ENCODE measurements at regions of chr12 and their contacts with region 1.

Region 1: DNA sequence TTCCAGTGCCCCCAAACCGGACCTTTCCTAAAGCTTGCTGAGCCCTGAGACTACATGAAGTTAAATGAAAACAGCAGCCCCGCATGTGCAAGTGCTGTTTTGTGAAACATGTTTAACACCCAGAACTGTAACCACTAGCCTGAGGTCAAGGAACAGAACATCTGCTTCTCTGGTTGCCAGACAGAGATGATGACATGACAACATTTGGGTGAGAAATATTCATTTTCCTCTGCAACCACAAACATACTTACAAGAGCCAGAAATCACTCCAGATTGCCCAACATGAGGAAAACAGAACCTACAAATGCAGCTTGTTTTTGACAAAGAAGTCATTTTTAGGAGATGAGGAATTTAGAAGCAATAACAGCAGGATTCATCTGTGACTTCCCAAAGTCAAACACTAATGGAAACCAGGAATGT is 110.4 kb downstream of the BCAT1 start:
- DNase-seq: peak; percentile 53
- ATAC-seq: peak; percentile 6
- H3K4me3 Mint-ChIP-seq: peak overlapping the region; percentile 36
- H3K27ac Mint-ChIP-seq: peak overlapping the region; percentile 87
- H3K4me1 Mint-ChIP-seq: peaks cover 51% of the 10 kb centered on the region
- H3K27me3 Mint-ChIP-seq: peaks cover 10% of the 10 kb centered on the region

Region 2: GRCh38 chr12:24561882-24562760 is 276.4 kb before region 1 on chr12:
- CTCF ChIA-PET with region 1: no interaction called
- POLR2A ChIA-PET with region 1: no interaction called
- intact Hi-C with region 1: loop called in 1 of 2 experiments (anchors 5 kb)
- DNase-seq: peak; percentile 51
- ATAC-seq: peak; percentile 53
- H3K4me3 Mint-ChIP-seq: peak overlapping the region; percentile 69
- H3K27ac Mint-ChIP-seq: peak overlapping the region; percentile 26
- H3K4me1 Mint-ChIP-seq: peaks cover 15% of the 10 kb centered on the region
- H3K27me3 Mint-ChIP-seq: peaks cover 59% of the 10 kb centered on the region

Region 3: DNA sequence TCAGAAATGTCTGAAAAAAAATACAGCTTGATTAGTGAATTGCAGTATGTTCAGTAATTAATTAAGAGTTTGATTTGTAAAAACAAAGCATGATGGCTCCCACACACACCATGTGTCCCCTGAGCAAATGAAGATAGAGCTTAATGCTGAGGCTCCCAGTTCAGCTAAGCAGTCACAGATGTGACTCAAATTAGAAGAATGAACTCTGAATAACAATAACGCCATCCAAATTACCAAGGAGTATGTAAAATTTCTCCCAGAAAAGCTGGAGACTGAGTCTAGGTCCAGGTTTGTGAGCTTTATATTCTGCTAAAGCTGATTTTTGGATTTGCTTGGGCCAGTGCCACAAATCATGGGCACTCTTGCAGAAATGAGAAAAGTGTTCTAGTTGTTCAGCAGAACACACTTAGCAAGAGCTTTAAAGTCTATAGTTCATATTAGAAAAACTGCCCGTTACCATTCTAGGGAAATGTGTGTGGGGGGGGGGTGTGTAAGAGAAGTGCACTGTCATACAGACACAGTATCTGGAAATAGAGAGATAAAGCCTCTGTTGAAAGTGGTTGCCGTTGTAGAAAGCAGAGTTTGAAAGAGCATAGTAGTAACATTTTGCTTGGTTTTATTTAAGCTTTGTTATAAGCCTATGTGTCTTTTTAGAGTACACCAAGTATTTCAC is 142.7 kb before region 1 on chr12:
- CTCF ChIA-PET with region 1: no interaction called
- POLR2A ChIA-PET with region 1: no interaction called
- intact Hi-C with region 1: no loop called
- DNase-seq: no peak
- ATAC-seq: no peak
- H3K4me3 Mint-ChIP-seq: no peak overlapping the region
- H3K27ac Mint-ChIP-seq: no peak overlapping the region
- H3K4me1 Mint-ChIP-seq: no peaks in the 10 kb centered on the region
- H3K27me3 Mint-ChIP-seq: peaks cover 9% of the 10 kb centered on the region

Region 4: GRCh38 chr12:24728366-24728765 is 110.2 kb before region 1 on chr12:
- CTCF ChIA-PET with region 1: interaction called, 4 read pairs
- POLR2A ChIA-PET with region 1: interaction called, 3 read pairs
- intact Hi-C with region 1: loop called (anchors 1 kb)
- DNase-seq: no peak
- ATAC-seq: no peak
- H3K4me3 Mint-ChIP-seq: no peak overlapping the region
- H3K27ac Mint-ChIP-seq: peak overlapping the region; percentile 37
- H3K4me1 Mint-ChIP-seq: peaks cover 53% of the 10 kb centered on the region
- H3K27me3 Mint-ChIP-seq: no peaks in the 10 kb centered on the region

Region 5: GRCh38 chr12:24852420-24852819 is 13.9 kb after region 1 on chr12:
- CTCF ChIA-PET with region 1: interaction called, 24 read pairs
- POLR2A ChIA-PET with region 1: interaction called, 3 read pairs
- intact Hi-C with region 1: no loop called
- DNase-seq: no peak
- ATAC-seq: no peak
- H3K4me3 Mint-ChIP-seq: no peak overlapping the region
- H3K27ac Mint-ChIP-seq: no peak overlapping the region
- H3K4me1 Mint-ChIP-seq: peaks cover 22% of the 10 kb centered on the region
- H3K27me3 Mint-ChIP-seq: peaks cover 7% of the 10 kb centered on the region

Region 6: DNA sequence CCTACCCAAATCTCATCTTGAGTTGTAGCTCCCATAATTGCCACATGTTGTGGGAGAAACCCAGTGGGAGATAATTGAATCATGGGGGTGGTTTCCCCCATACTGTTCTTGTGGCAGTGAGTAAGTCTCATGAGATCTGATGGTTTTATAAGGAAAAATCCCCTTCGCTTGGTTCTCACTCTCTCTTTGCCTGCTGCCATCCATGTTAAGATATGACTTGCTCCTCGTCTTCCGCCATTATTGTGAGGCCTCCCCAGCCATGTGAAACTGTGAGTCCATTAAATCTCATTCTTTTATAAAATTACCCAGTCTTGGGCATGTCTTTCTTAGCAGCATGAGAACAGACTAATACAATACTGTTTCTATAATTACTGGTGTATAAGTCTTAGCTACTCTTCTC is 116.8 kb after region 1 on chr12:
- CTCF ChIA-PET with region 1: interaction called, 3 read pairs
- POLR2A ChIA-PET with region 1: interaction called, 4 read pairs
- intact Hi-C with region 1: loop called in 1 of 2 experiments (anchors 1 kb)
- DNase-seq: peak; percentile 46
- ATAC-seq: peak; percentile 72
- H3K4me3 Mint-ChIP-seq: no peak overlapping the region
- H3K27ac Mint-ChIP-seq: no peak overlapping the region
- H3K4me1 Mint-ChIP-seq: peaks cover 41% of the 10 kb centered on the region
- H3K27me3 Mint-ChIP-seq: peaks cover 30% of the 10 kb centered on the region

Measured in activated CD4-positive, alpha-beta T cell treated with anti-CD3 and anti-CD28 coated beads for 36 hours (primary cell).